ENCODE measurements at regions of chr7 and their contacts with region 1.

Region 1: GRCh38 chr7:127708788-127709187 is 56.8 kb downstream of the SND1 start:
- DNase-seq: no peak
- ATAC-seq: peak; percentile 85
- H3K4me3 Mint-ChIP-seq: no peak overlapping the region
- H3K27ac Mint-ChIP-seq: no peak overlapping the region
- H3K4me1 Mint-ChIP-seq: no peaks in the 10 kb centered on the region
- H3K27me3 Mint-ChIP-seq: no peaks in the 10 kb centered on the region
- CTCF ChIP-seq: no peak

Region 2: DNA sequence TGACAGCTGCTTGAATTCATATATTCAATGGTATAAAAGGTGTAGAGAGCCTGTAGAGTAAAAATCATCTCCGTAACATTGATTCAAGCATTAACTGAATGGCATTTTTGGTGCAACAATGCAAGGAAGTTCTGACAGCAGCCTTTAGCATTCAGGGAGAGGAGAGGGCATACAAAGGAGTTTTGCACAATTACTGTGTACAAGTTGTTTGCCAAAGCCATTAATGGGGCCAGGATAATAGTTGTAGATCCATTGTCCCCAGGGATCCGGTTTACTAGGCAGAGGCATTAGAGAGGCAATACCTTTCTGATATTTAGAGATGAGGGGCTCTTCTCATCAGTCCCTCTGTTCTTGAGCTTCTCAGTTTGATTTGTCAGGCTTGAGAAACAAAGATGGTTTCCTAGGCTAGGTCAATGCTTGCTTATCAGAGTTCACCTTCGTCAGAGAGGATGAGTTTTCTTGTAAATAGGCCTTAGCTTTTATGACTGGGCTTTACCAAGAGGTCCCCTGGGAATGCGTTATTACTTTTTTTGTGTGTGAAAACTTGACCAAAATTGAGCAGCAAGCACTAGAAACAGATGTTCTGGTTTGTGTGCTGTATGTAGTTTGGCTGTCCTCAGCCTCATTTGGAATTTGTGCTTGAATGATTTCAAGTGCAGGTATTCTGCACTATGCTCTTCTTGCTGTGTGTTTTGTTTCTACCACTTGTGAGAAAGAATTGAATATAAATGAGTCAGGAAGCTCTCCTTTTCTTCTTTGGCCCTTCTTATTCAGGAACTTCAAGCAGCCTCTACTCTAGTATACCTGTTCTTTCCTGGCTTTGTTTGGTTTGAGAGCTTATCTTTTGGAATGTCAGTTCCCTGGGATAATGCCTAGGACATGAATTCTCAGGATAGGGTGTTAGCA is 24.8 kb before region 1 on chr7:
- CTCF ChIA-PET with region 1: interaction called, 10 read pairs
- POLR2A ChIA-PET with region 1: no interaction called
- intact Hi-C with region 1: no loop called
- DNase-seq: no peak
- ATAC-seq: peak; percentile 18
- H3K4me3 Mint-ChIP-seq: no peak overlapping the region
- H3K27ac Mint-ChIP-seq: no peak overlapping the region
- H3K4me1 Mint-ChIP-seq: peaks cover 42% of the 10 kb centered on the region
- H3K27me3 Mint-ChIP-seq: no peaks in the 10 kb centered on the region
- CTCF ChIP-seq: no peak

Region 3: GRCh38 chr7:128031901-128032604 is 323.3 kb after region 1 on chr7:
- CTCF ChIA-PET with region 1: no interaction called
- POLR2A ChIA-PET with region 1: no interaction called
- intact Hi-C with region 1: loop called (anchors 2 kb)
- DNase-seq: peak; percentile 45
- ATAC-seq: peak; percentile 83
- H3K4me3 Mint-ChIP-seq: peak overlapping the region; percentile 88
- H3K27ac Mint-ChIP-seq: no peak overlapping the region
- H3K4me1 Mint-ChIP-seq: peaks cover 26% of the 10 kb centered on the region
- H3K27me3 Mint-ChIP-seq: peaks cover 4% of the 10 kb centered on the region
- CTCF ChIP-seq: no peak

Region 4: GRCh38 chr7:128322040-128322643 is 613.4 kb after region 1 on chr7:
- CTCF ChIA-PET with region 1: interaction called, 7 read pairs
- POLR2A ChIA-PET with region 1: no interaction called
- intact Hi-C with region 1: loop called (anchors 1 kb)
- DNase-seq: no peak
- ATAC-seq: peak; percentile 34
- H3K4me3 Mint-ChIP-seq: no peak overlapping the region
- H3K27ac Mint-ChIP-seq: no peak overlapping the region
- H3K4me1 Mint-ChIP-seq: no peaks in the 10 kb centered on the region
- H3K27me3 Mint-ChIP-seq: no peaks in the 10 kb centered on the region
- CTCF ChIP-seq: no peak